ENCODE measurements at regions of chr3 and their contacts with region 1.

Region 1: DNA sequence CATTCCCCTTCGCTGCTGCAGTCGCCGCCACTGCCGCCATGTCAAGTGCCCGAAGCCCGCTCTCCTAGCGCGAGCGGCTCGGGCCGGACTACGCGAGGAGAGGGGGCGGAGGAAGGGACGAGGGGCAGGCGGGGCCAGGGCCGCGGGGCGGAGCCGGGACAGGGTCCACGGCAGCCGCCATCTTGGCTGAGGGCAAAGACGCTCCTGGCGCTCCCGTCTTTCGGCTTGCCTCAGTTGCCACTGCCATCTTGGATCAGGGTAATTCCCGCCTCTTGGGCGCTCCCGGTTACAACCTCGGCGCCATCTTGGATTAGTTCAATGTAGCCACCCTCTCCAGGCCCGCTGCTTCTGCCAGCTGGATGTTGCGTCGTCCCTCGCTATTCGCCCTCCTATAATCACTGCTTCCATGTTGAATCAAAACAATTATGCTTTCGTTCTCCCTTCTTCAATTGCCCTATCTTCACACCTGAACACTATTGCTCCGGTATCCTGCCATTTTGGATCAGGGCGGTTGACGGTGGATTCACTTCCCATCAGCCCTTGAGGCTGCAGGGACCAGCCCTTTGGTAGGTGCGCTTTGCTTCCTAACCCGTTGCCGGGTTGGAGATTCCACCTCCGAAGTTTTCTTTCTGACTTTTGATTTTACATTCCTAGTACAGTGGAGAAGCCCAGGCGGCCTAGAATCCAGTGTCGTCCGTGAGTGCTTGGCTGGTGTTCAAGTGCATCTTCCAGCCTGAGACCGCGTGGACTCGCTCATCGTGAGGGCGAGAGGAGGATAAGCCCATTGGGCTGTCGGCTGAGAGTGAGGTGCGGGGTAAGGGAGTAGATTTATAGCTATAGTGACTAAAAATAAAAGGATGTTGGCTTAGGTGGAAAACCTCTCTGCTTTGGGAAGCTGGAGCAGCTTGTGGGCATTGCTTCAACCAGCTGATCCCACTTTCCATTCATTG is at the start of gene HACD2:
- DNase-seq: peak; percentile 95
- ATAC-seq: peak; percentile 93
- H3K4me3 ChIP-seq: peak within 1 kb of the TSS; percentile 68 to 78
- H3K27ac ChIP-seq: peak within 1 kb of the TSS; percentile 92
- H3K4me1 ChIP-seq: peaks cover 11 to 21% of the 10 kb centered on the region in 2 experiments
- H3K27me3 ChIP-seq: no peaks in the 10 kb centered on the region
- CTCF ChIP-seq: no peak
- POLR2A ChIP-seq: peak; percentile 85
- RAD21 ChIP-seq: no peak
- total RNA-seq, gene HACD2: 43.0 TPM

Region 2: DNA sequence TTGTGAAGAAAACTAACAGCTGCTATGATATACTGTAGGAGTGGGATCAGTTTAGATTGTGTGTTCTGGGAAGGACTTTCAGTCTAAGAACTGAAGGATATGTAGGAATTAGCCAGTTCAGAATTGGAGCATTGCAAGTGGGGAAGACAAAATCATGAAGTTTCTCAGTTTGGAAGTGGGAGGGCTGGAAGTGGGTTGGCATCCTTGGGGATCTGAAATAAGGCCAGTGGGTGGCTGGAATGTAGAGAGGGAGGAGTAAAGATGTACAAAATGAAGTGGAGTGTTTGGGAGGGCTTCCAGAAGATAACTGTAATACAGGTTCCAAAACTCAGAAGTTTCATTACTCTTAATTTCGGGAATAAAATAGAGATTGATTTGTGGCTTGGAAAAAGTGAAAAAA is 366.3 kb before region 1 on chr3:
- CTCF ChIA-PET with region 1: no interaction called
- POLR2A ChIA-PET with region 1: no interaction called
- RAD21 ChIA-PET with region 1: no interaction called
- intact Hi-C with region 1: no loop called
- DNase-seq: no peak
- ATAC-seq: no peak
- H3K4me3 ChIP-seq: no peak overlapping the region
- H3K27ac ChIP-seq: no peak overlapping the region
- H3K4me1 ChIP-seq: no peaks in the 10 kb centered on the region
- H3K27me3 ChIP-seq: no peaks in the 10 kb centered on the region
- CTCF ChIP-seq: no peak
- POLR2A ChIP-seq: no peak
- RAD21 ChIP-seq: no peak

Region 3: DNA sequence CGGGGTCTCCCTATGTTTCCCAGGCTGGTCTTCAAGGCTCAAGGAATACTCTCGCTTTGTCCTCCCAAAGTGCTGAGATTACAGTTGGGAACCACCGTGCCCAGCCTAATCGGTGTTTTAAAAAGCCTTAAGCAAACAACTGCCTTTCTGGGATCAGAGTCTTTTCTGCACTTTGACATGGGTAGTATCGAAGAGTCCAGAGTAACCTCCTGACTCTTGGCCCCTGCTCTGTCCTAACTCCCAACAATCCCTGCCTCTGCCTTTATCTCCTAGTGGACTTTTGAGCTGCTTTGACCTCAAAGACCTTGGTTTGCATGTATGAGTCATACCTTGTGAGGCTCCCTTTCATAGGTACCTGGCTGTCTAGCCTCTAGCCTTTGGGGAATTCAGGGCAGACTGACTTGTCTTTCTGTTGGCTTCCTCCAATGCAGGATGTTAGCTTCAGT is 20.5 kb after region 1 on chr3:
- CTCF ChIA-PET with region 1: no interaction called
- POLR2A ChIA-PET with region 1: interaction called, 8 read pairs
- RAD21 ChIA-PET with region 1: interaction called in 1 of 2 experiments, 5 read pairs
- intact Hi-C with region 1: loop called (anchors 1 kb)
- DNase-seq: peak; percentile 75
- ATAC-seq: peak; percentile 82
- H3K4me3 ChIP-seq: peak overlapping the region in 1 of 2 experiments; percentile 18; a peak in 1 of 4 replicates
- H3K27ac ChIP-seq: peak overlapping the region; percentile 78
- H3K4me1 ChIP-seq: peaks cover 61 to 63% of the 10 kb centered on the region in 2 experiments
- H3K27me3 ChIP-seq: no peaks in the 10 kb centered on the region
- CTCF ChIP-seq: no peak
- POLR2A ChIP-seq: no peak
- RAD21 ChIP-seq: no peak

Region 4: GRCh38 chr3:123642182-123642956 is 57.1 kb after region 1 on chr3:
- CTCF ChIA-PET with region 1: interaction called, 5 read pairs
- POLR2A ChIA-PET with region 1: no interaction called
- RAD21 ChIA-PET with region 1: no interaction called
- intact Hi-C with region 1: loop called (anchors 2 kb)
- DNase-seq: peak; percentile 93
- ATAC-seq: peak; percentile 100
- H3K4me3 ChIP-seq: no peak overlapping the region
- H3K27ac ChIP-seq: no peak overlapping the region
- H3K4me1 ChIP-seq: peaks cover 0 to 8% of the 10 kb centered on the region in 2 experiments; a peak in 2 of 4 replicates
- H3K27me3 ChIP-seq: no peaks in the 10 kb centered on the region
- CTCF ChIP-seq: peak; percentile 91 to 99 (median 98)
- POLR2A ChIP-seq: no peak
- RAD21 ChIP-seq: peak; percentile 84

Measured in HCT116 (cell line).